Activated T-helper 2 cell treated with anti-CD3 and anti-CD28 coated beads, Interferon-gamma antibody, Interleukin-2, Interleukin-4, amounts not matched to agents 10 μg/mL and 5 μg/mL and 100 μg/mL, durations not matched to agents 14 hours and 24 hours and 36 hours (primary cell): ENCODE measurements at regions of chr21 and their contacts with region 1.

Region 1: GRCh38 chr21:25428537-25428936 is 178.7 kb downstream of the MRPL39 start:
- DNase-seq: no peak
- H3K4me3 Mint-ChIP-seq: peak overlapping the region; percentile 40
- H3K27ac Mint-ChIP-seq: peak overlapping the region; percentile 53
- H3K4me1 Mint-ChIP-seq: peaks cover 47% of the 10 kb centered on the region
- H3K27me3 Mint-ChIP-seq: no peaks in the 10 kb centered on the region

Region 2: GRCh38 chr21:25396135-25396711 is 32.3 kb before region 1 on chr21:
- intact Hi-C with region 1: loop called (anchors 1 kb)
- DNase-seq: peak; percentile 48
- H3K4me3 Mint-ChIP-seq: peak overlapping the region; percentile 2
- H3K27ac Mint-ChIP-seq: peak overlapping the region; percentile 88
- H3K4me1 Mint-ChIP-seq: peaks cover 17% of the 10 kb centered on the region
- H3K27me3 Mint-ChIP-seq: no peaks in the 10 kb centered on the region

Region 3: DNA sequence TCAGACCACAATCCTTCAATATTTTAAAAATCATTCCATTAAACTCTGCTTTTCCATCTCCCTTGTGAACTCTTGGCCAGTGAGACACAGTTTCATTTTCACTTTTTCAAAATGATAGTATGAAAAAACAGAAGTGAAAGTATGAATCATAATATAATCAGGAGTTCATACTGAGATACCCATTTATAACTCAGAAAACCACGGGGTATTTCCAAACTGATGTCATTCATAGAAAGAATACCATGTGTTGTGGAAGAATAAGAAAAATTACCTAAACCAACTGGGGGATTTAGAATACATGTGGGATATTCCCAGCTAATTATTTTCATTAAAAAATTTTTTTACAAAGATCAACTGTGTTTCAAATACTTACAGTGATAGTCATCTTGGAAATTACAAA is 28.9 kb after region 1 on chr21:
- intact Hi-C with region 1: loop called (anchors 1 kb)
- DNase-seq: no peak
- H3K4me3 Mint-ChIP-seq: peak overlapping the region; percentile 58
- H3K27ac Mint-ChIP-seq: peak overlapping the region; percentile 84
- H3K4me1 Mint-ChIP-seq: peaks cover 50% of the 10 kb centered on the region
- H3K27me3 Mint-ChIP-seq: no peaks in the 10 kb centered on the region

Region 4: GRCh38 chr21:25464275-25464674 is 35.7 kb after region 1 on chr21:
- intact Hi-C with region 1: loop called (anchors 1 kb)
- DNase-seq: no peak
- H3K4me3 Mint-ChIP-seq: no peak overlapping the region
- H3K27ac Mint-ChIP-seq: peak overlapping the region; percentile 93
- H3K4me1 Mint-ChIP-seq: peaks cover 60% of the 10 kb centered on the region
- H3K27me3 Mint-ChIP-seq: no peaks in the 10 kb centered on the region

Region 5: DNA sequence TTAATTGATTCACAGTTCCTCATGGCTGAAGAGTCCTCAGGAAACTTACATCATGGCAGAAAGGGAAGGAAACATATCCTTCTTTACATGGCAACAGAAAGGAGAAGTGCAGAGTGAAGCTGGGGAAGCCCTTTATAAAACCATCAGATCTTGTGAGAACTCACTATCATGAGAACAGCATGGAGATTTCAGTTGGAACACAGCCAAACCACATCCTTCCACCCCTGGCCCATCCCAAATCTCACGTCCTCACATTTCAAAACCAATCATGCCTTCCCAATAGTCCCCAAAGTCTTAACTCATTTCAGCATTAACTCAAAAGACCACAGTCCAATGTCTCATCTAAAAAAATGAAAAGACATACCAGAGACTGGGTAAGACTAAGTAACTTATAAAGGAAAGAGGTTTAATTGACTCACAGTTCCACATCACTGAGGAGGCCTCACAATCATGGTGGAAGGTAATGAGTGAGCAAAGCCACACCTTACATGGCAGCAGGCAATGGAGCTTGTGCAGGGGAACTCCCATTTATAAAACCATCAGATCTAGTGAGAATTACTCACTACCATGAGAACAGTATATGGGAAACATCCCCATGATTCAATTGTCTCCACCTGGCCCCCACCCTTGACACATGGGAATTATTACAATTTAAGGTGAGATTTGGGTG is 73.6 kb after region 1 on chr21:
- intact Hi-C with region 1: loop called (anchors 1 kb)
- DNase-seq: no peak
- H3K4me3 Mint-ChIP-seq: no peak overlapping the region
- H3K27ac Mint-ChIP-seq: peak overlapping the region; percentile 92
- H3K4me1 Mint-ChIP-seq: peaks cover 40% of the 10 kb centered on the region
- H3K27me3 Mint-ChIP-seq: no peaks in the 10 kb centered on the region

Region 6: GRCh38 chr21:25561668-25562641 is 133.4 kb after region 1 on chr21:
- intact Hi-C with region 1: loop called (anchors 1 kb)
- DNase-seq: peak; percentile 68
- H3K4me3 Mint-ChIP-seq: peak overlapping the region; percentile 91
- H3K27ac Mint-ChIP-seq: peak overlapping the region; percentile 99
- H3K4me1 Mint-ChIP-seq: peaks cover 54% of the 10 kb centered on the region
- H3K27me3 Mint-ChIP-seq: no peaks in the 10 kb centered on the region

Region 7: DNA sequence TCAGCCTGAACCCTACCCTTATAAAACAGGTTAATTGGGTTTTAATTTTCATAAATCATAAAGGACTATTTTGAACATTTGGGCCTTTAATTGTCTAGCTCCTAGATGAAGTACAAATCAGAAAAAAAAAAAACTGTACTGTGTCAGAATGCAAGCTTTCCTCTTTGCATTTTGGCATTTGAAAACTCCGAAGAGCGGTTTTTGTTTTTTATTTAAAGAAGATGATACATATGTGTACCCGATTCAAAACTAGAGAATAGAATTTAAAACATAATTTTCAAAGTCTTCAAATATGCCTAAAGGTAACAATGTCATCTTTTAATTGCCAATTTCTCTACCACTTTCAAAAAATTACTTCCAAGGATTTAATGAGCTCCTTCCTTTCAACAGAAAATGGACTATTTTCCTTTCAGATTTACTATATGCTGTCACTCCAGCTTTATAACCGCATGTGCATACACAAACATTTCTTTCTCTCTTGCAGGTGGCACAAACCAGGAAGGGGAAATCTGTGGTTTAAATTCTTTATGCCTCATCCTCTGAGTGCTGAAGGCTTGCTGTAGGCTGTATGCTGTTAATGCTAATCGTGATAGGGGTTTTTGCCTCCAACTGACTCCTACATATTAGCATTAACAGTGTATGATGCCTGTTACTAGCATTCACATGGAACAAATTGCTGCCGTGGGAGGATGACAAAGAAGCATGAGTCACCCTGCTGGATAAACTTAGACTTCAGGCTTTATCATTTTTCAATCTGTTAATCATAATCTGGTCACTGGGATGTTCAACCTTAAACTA is 145.1 kb after region 1 on chr21:
- intact Hi-C with region 1: loop called (anchors 1 kb)
- DNase-seq: peak; percentile 38
- H3K4me3 Mint-ChIP-seq: peak overlapping the region; percentile 77
- H3K27ac Mint-ChIP-seq: peak overlapping the region; percentile 93
- H3K4me1 Mint-ChIP-seq: peaks cover 76% of the 10 kb centered on the region
- H3K27me3 Mint-ChIP-seq: no peaks in the 10 kb centered on the region